Activated CD4-positive, alpha-beta T cell treated with anti-CD3 and anti-CD28 coated beads, Interleukin-2, amount 10 ng/mL, durations not matched to agents 24 days and 14 days (primary cell): ENCODE measurements at regions of chr1 and their contacts with region 1.

Region 1: DNA sequence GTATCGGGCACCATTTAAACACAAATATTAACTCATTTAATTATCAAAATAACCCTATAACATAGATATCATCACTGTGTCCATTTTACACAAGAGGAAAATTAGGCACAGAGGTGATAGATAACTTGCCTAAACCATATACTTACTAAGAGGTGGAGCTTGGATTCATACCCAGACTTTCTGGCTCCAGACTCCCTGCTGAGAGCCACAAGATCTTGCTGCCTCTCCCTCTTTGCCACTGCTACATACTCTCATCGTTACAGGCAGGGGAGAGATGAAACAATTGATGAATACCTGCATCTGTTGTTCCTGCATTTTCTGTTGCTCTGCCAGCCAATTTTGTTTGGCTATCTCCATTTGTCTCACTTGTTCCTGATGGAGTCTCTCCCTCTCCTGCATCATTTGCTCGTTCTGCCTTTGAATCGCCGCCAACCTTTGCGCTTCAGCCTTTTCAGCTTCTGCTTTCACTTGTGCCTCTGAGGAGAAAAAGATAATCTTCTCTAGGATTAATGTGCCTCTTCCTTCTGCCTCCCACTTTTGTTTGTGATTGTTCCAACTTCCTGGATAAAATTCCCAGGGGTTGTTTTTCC is 10.6 kb downstream of the GBP5 start:
- DNase-seq: no peak
- H3K4me3 Mint-ChIP-seq: peak overlapping the region; percentile 67
- H3K27ac Mint-ChIP-seq: peak overlapping the region; percentile 79
- H3K4me1 Mint-ChIP-seq: peaks cover 74% of the 10 kb centered on the region
- H3K27me3 Mint-ChIP-seq: no peaks in the 10 kb centered on the region

Region 2: GRCh38 chr1:89198491-89199072 is 63.4 kb before region 1 on chr1 and contains the start of gene GBP4:
- intact Hi-C with region 1: loop called (anchors 1 kb)
- DNase-seq: peak; percentile 87
- H3K4me3 Mint-ChIP-seq: peak within 1 kb of the TSS; percentile 91
- H3K27ac Mint-ChIP-seq: peak within 1 kb of the TSS; percentile 96
- H3K4me1 Mint-ChIP-seq: peaks cover 67% of the 10 kb centered on the region
- H3K27me3 Mint-ChIP-seq: no peaks in the 10 kb centered on the region
- total RNA-seq, gene GBP4: 29.5 and 33.5 TPM in 2 replicates

Region 3: GRCh38 chr1:89286549-89287180 is 24.6 kb after region 1 on chr1:
- intact Hi-C with region 1: no loop called
- DNase-seq: peak; percentile 81
- H3K4me3 Mint-ChIP-seq: peak overlapping the region; percentile 72
- H3K27ac Mint-ChIP-seq: peak overlapping the region; percentile 90
- H3K4me1 Mint-ChIP-seq: peaks cover 67% of the 10 kb centered on the region
- H3K27me3 Mint-ChIP-seq: no peaks in the 10 kb centered on the region

Region 4: GRCh38 chr1:89472952-89473351 is 210.9 kb after region 1 on chr1:
- intact Hi-C with region 1: no loop called
- DNase-seq: no peak
- H3K4me3 Mint-ChIP-seq: no peak overlapping the region
- H3K27ac Mint-ChIP-seq: no peak overlapping the region
- H3K4me1 Mint-ChIP-seq: no peaks in the 10 kb centered on the region
- H3K27me3 Mint-ChIP-seq: peaks cover 56% of the 10 kb centered on the region